WTC11 (cell line): ENCODE measurements at regions of chr21 and their contacts with region 1.

Region 1: DNA sequence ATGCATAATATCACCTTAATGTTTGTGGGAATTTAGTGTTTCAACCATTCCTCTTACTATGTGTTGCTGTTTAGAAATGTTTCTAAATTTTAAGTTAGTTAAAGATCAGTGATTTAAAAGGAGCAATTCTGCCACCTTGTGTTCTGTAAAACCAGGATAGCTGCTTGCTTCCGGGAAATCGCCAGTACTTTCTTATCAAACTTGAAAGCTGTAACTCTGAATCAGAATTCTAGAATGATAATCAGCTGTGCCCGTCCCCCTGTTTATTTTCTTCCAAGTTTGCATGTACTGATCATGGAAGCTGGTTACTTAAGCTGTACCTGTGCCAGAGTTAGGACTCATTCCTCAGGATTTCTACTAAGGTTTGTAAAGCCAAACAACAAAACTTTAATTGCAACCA is 656.4 kb downstream of the LTN1 start:
- DNase-seq: no peak
- ATAC-seq: no peak; the same call in 1 of the 2 replicates
- H3K4me3 Mint-ChIP-seq: no peak overlapping the region
- H3K27ac Mint-ChIP-seq: no peak overlapping the region
- H3K4me1 Mint-ChIP-seq: peaks cover 3% of the 10 kb centered on the region; the same call in 1 of the 2 replicates
- H3K27me3 Mint-ChIP-seq: no peaks in the 10 kb centered on the region
- CTCF ChIP-seq: peak; percentile 24; the same call in 1 of the 2 replicates

Region 2: DNA sequence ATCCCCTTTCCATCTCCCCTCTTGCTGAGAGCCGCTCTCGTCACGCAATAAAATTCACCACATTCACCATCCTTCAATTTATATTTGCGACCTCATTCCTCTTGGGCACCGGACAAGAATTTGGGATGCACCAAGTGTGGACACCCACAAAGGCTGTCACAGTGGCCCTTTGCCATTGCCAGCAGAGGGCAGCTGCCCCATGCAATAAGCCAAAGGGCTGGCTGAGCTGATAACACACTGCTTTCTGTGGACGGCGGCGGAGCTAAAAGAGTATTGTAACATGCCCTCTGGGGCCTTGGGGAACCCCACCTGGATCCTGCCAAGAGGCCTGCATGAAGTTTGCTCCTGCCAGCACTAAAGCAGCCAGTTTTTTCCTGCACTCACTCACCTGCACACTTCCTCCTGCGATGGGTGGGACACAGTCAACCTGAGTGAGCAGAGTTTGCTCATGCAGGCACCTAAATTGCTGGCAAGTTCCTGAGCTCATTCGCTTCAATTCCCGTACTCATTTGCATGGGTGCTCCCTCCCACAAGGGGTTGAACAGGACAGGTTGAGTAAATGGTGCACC is 577.1 kb before region 1 on chr21:
- CTCF ChIA-PET with region 1: interaction called, 24 read pairs
- POLR2A ChIA-PET with region 1: interaction called, 3 read pairs
- DNase-seq: peak; percentile 68
- ATAC-seq: peak; percentile 90
- H3K4me3 Mint-ChIP-seq: no peak overlapping the region
- H3K27ac Mint-ChIP-seq: peak overlapping the region; percentile 42; the same call in 1 of the 2 replicates
- H3K4me1 Mint-ChIP-seq: peaks cover 25% of the 10 kb centered on the region
- H3K27me3 Mint-ChIP-seq: no peaks in the 10 kb centered on the region
- CTCF ChIP-seq: no peak

Region 3: GRCh38 chr21:28177124-28177523 is 159.2 kb before region 1 on chr21:
- CTCF ChIA-PET with region 1: no interaction called
- POLR2A ChIA-PET with region 1: no interaction called
- DNase-seq: no peak
- ATAC-seq: no peak
- H3K4me3 Mint-ChIP-seq: no peak overlapping the region
- H3K27ac Mint-ChIP-seq: no peak overlapping the region
- H3K4me1 Mint-ChIP-seq: no peaks in the 10 kb centered on the region
- H3K27me3 Mint-ChIP-seq: no peaks in the 10 kb centered on the region
- CTCF ChIP-seq: no peak

Region 4: GRCh38 chr21:28325618-28326017 is 10.7 kb before region 1 on chr21:
- CTCF ChIA-PET with region 1: interaction called, 13 read pairs
- POLR2A ChIA-PET with region 1: no interaction called
- DNase-seq: no peak
- ATAC-seq: peak; percentile 98
- H3K4me3 Mint-ChIP-seq: no peak overlapping the region
- H3K27ac Mint-ChIP-seq: peak overlapping the region; percentile 87
- H3K4me1 Mint-ChIP-seq: peaks cover 20% of the 10 kb centered on the region
- H3K27me3 Mint-ChIP-seq: no peaks in the 10 kb centered on the region
- CTCF ChIP-seq: no peak